H1 (cell line): ENCODE measurements at regions of chr12 and their contacts with region 1.

Region 1: GRCh38 chr12:66693901-66694675 is 15.2 kb upstream of the GRIP1 start:
- DNase-seq: no peak
- H3K4me3 ChIP-seq: no peak overlapping the region
- H3K27ac ChIP-seq: no peak overlapping the region
- H3K4me1 ChIP-seq: no peaks in the 10 kb centered on the region
- H3K27me3 ChIP-seq: no peaks in the 10 kb centered on the region; a peak in 1 of 7 replicates
- CTCF ChIP-seq: peak in 2 of 3 experiments; percentile 32 to 62; a peak in 2 of 4 replicates
- EP300 ChIP-seq: no peak
- POLR2A ChIP-seq: no peak
- RAD21 ChIP-seq: peak; percentile 63 to 73

Region 2: DNA sequence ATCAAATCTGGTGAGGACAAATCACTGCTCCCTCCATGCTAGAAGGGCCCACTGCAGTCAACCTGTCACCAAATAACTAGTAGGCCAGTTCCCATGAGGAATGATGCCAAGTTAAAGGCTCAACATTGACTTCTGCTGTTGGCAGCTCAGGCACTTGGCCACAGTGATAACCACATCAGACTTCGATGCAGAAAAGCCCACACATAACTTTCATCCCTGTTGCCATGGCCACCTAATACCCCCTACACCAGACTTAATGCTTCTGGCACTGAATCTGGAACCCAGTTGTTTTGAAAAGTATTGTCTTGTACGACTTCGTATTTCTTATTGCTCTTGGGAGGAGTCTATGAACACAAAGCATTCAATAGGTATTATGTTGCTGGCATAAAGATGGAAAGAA is 436.1 kb before region 1 on chr12:
- CTCF ChIA-PET with region 1: no interaction called
- POLR2A ChIA-PET with region 1: no interaction called
- DNase-seq: peak in 1 of 2 experiments; percentile 13
- H3K4me3 ChIP-seq: no peak overlapping the region
- H3K27ac ChIP-seq: no peak overlapping the region
- H3K4me1 ChIP-seq: peaks cover 0 to 3% (median 0%) of the 10 kb centered on the region in 4 experiments; a peak in 1 of 7 replicates
- H3K27me3 ChIP-seq: no peaks in the 10 kb centered on the region
- CTCF ChIP-seq: no peak
- EP300 ChIP-seq: no peak
- POLR2A ChIP-seq: no peak
- RAD21 ChIP-seq: no peak

Region 3: GRCh38 chr12:66647034-66647691 is 46.9 kb before region 1 on chr12:
- CTCF ChIA-PET with region 1: no interaction called
- POLR2A ChIA-PET with region 1: no interaction called
- DNase-seq: no peak
- H3K4me3 ChIP-seq: no peak overlapping the region
- H3K27ac ChIP-seq: no peak overlapping the region
- H3K4me1 ChIP-seq: no peaks in the 10 kb centered on the region
- H3K27me3 ChIP-seq: no peaks in the 10 kb centered on the region
- CTCF ChIP-seq: no peak
- EP300 ChIP-seq: no peak
- POLR2A ChIP-seq: no peak
- RAD21 ChIP-seq: no peak

Region 4: GRCh38 chr12:66683073-66683472 is 11.0 kb before region 1 on chr12:
- CTCF ChIA-PET with region 1: interaction called, 72 read pairs
- POLR2A ChIA-PET with region 1: interaction called, 3 read pairs
- DNase-seq: no peak
- H3K4me3 ChIP-seq: no peak overlapping the region
- H3K27ac ChIP-seq: no peak overlapping the region
- H3K4me1 ChIP-seq: peaks cover 3 to 13% (median 8%) of the 10 kb centered on the region in 4 experiments; a peak in 4 of 7 replicates
- H3K27me3 ChIP-seq: no peaks in the 10 kb centered on the region
- CTCF ChIP-seq: no peak
- EP300 ChIP-seq: no peak
- POLR2A ChIP-seq: no peak
- RAD21 ChIP-seq: no peak

Region 5: DNA sequence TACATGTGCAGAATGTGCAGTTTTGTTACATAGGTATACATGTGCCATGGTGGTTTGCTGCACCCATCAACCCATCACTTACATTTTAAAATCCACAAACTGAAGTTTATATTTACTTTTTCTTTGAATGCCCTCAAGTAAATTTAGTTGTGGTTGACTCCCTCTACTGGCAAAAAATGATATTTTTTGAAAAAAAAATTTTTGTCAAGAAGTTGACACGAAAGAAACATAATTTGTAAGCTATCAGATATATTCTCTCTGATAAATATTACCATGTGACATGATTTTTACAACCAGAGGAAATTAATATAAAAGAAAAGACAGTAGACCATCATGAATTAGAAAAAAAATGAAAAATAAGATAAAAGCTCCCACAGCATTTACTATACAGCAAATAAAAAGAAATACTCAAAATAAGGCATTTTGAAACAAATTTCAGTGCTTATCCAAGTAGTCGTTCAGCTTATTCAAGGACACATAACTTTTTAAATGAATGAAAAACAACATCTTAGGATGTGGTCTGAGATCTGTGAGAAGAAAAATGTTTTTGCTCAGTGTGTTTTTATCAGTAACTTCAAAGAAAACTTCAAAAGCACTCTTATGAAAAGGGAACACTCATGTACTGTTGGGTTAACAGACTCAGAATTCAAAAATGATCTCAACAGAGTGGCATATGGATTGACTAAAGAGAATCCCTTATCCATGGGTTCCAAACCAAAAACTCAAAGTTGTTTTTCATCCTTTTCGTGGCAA is 14.8 kb after region 1 on chr12:
- CTCF ChIA-PET with region 1: interaction called, 33 read pairs
- POLR2A ChIA-PET with region 1: no interaction called
- DNase-seq: no peak
- H3K4me3 ChIP-seq: no peak overlapping the region
- H3K27ac ChIP-seq: no peak overlapping the region
- H3K4me1 ChIP-seq: no peaks in the 10 kb centered on the region
- H3K27me3 ChIP-seq: peaks cover 0 to 1% (median 0%) of the 10 kb centered on the region in 4 experiments; a peak in 1 of 7 replicates
- CTCF ChIP-seq: no peak
- EP300 ChIP-seq: no peak
- POLR2A ChIP-seq: no peak
- RAD21 ChIP-seq: peak in 1 of 2 experiments; percentile 22; a peak in 2 of 4 replicates

Region 6: GRCh38 chr12:66860752-66861750 is 167.0 kb after region 1 on chr12:
- CTCF ChIA-PET with region 1: interaction called, 37 read pairs
- POLR2A ChIA-PET with region 1: no interaction called
- DNase-seq: peak; percentile 3 to 77
- H3K4me3 ChIP-seq: no peak overlapping the region
- H3K27ac ChIP-seq: no peak overlapping the region
- H3K4me1 ChIP-seq: no peaks in the 10 kb centered on the region
- H3K27me3 ChIP-seq: no peaks in the 10 kb centered on the region
- CTCF ChIP-seq: peak; percentile 58 to 82 (median 81)
- EP300 ChIP-seq: no peak
- POLR2A ChIP-seq: no peak
- RAD21 ChIP-seq: peak; percentile 88